Prostate gland (tissue), 2 donors: ENCODE measurements at regions of chr1 and their contacts with region 1.

Region 1: GRCh38 chr1:119367427-119368124 is 1.0 kb upstream of the HAO2 start:
- DNase-seq: no peak
- H3K4me3 ChIP-seq: no peak overlapping the region
- H3K27ac ChIP-seq: no peak overlapping the region
- H3K4me1 ChIP-seq: no peaks in the 10 kb centered on the region
- H3K27me3 ChIP-seq: no peaks in the 10 kb centered on the region
- CTCF ChIP-seq: peak; percentile 70 to 89 (median 86)
- POLR2A ChIP-seq: no peak

Region 2: GRCh38 chr1:119286587-119287181 is 80.9 kb before region 1 on chr1:
- intact Hi-C with region 1: loop called (anchors 2 kb)
- DNase-seq: peak; percentile 28
- H3K4me3 ChIP-seq: no peak overlapping the region
- H3K27ac ChIP-seq: no peak overlapping the region
- H3K4me1 ChIP-seq: no peaks in the 10 kb centered on the region
- H3K27me3 ChIP-seq: no peaks in the 10 kb centered on the region
- CTCF ChIP-seq: peak; percentile 14 to 75 (median 59)
- POLR2A ChIP-seq: no peak

Region 3: GRCh38 chr1:119647734-119648619 is 280.4 kb after region 1 on chr1 and contains the start of gene ZNF697:
- intact Hi-C with region 1: no loop called
- DNase-seq: peak; percentile 98
- H3K4me3 ChIP-seq: peak within 1 kb of the TSS; percentile 86 to 88
- H3K27ac ChIP-seq: peak within 1 kb of the TSS; percentile 91 to 93
- H3K4me1 ChIP-seq: no peaks in the 10 kb centered on the region
- H3K27me3 ChIP-seq: no peaks in the 10 kb centered on the region
- CTCF ChIP-seq: peak in 2 of 4 experiments; percentile 49 to 51
- POLR2A ChIP-seq: peak; percentile 66
- total RNA-seq, gene ZNF697: 17.4 to 25.6 TPM

Region 4: DNA sequence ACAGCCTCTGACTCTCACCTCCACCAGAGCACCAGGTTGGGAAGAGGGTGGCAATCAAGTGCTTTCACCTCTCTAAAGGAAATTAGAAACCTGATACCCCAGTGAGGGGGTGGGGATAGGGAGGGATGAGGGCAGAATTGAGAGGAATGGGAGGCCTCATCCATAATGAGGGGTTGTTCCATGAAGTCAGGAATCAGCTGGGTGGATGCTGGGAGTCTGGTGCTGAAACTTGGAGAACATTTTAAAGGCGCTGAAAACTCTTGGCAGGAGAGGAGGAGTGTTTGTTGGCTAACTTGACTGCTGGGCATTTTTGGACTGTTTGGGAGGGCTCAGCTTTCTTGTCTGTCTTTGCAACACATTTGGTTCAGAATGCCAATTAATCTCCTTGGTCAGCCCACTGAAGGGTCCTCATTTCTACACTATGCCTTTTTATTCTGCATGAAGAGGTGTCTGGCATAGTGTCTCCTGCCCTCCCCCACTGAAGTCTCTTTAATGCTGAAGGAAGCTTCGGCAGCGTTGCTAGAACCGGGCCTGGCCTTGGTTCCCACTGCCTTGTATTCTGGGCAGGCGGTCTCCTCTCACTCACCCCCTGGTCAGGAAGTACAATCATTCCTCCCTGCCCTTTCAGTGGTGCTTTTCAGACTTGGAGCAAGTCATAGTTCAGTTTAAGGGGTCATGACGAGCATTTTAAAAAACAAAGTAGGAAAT is 346.3 kb after region 1 on chr1:
- intact Hi-C with region 1: no loop called
- DNase-seq: no peak
- H3K4me3 ChIP-seq: peak overlapping the region in 1 of 2 donors; percentile 6
- H3K27ac ChIP-seq: peak overlapping the region; percentile 84 to 85
- H3K4me1 ChIP-seq: no peaks in the 10 kb centered on the region
- H3K27me3 ChIP-seq: no peaks in the 10 kb centered on the region
- CTCF ChIP-seq: no peak
- POLR2A ChIP-seq: no peak